Naive thymus-derived CD4-positive, alpha-beta T cell (primary cell): ENCODE measurements at regions of chr14 and their contacts with region 1.

Region 1: GRCh38 chr14:21455911-21456667 is at the start of gene CHD8:
- DNase-seq: peak; percentile 95 to 100 (median 100)
- ATAC-seq: peak; percentile 98
- H3K4me3 ChIP-seq: peak within 1 kb of the TSS; percentile 91
- H3K4me3 Mint-ChIP-seq: peak within 1 kb of the TSS; percentile 89 to 100 (median 98)
- H3K27ac ChIP-seq: peak within 1 kb of the TSS; percentile 94
- H3K27ac Mint-ChIP-seq: peak within 1 kb of the TSS; percentile 96 to 100 (median 99)
- H3K4me1 ChIP-seq: peaks cover 17 to 21% of the 10 kb centered on the region in 2 donors
- H3K4me1 Mint-ChIP-seq: peaks cover 18 to 48% (median 41%) of the 10 kb centered on the region in 7 donors
- H3K27me3 ChIP-seq: no peaks in the 10 kb centered on the region
- H3K27me3 Mint-ChIP-seq: no peaks in the 10 kb centered on the region
- total RNA-seq, gene CHD8: 125 to 143 (median 133) TPM

Region 2: DNA sequence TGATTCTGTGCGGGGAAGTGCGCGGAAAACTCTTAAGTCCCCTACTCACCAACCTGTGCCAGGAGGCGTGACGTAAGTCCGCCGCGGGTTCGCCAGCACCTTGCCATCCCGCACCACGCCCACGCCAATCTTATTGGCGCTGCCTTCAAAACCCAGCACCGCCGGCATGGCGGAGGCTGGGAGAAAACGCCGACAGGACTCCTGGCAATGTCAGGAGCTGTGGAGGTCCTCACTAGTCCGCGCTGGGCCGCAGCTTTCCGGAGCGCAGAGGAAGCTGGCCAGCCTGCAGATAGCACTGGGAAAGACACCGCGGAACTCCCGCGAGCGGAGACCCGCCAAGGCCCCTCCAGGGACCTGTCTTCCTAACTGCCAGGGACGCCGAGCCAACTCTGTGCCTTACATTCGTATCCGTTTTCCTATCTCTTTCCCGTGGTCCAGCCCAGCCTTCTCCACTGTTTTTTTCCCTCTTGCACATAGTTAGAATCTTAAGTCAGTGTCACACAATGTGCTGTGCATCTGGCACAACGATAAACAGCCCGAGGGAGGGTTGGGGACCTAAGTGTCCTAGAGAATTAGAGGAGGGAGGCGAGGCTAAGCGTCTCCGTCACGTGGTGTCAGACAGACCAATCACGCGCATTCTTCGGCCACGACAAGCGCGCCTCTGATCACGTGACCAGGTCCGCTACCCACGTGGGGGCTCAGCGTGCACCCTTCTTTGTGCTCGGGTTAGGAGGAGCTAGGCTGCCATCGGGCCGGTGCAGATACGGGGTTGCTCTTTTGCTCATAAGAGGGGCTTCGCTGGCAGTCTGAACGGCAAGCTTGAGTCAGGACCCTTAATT is 1001.4 kb before region 1 on chr14 and contains the starts of genes APEX1 and OSGEP:
- CTCF ChIA-PET with region 1: no interaction called
- POLR2A ChIA-PET with region 1: no interaction called
- intact Hi-C with region 1: loop called in 1 of 2 experiments (anchors 10 kb)
- DNase-seq: peak; percentile 86 to 99 (median 98)
- ATAC-seq: peak; percentile 88
- H3K4me3 ChIP-seq: peak within 1 kb of the TSS; percentile 80
- H3K4me3 Mint-ChIP-seq: peak within 1 kb of the TSS in 6 of 10 donors; percentile 7 to 43 (median 30)
- H3K27ac ChIP-seq: peak within 1 kb of the TSS; percentile 85
- H3K27ac Mint-ChIP-seq: no peak within 1 kb of the TSS
- H3K4me1 ChIP-seq: peaks cover 13 to 18% of the 10 kb centered on the region in 2 donors
- H3K4me1 Mint-ChIP-seq: peaks cover 12 to 30% (median 19%) of the 10 kb centered on the region in 7 donors
- H3K27me3 ChIP-seq: no peaks in the 10 kb centered on the region
- H3K27me3 Mint-ChIP-seq: no peaks in the 10 kb centered on the region
- total RNA-seq, gene APEX1: 97.4 to 159 (median 129) TPM
- total RNA-seq, gene OSGEP: 54.2 to 77.2 (median 69.1) TPM

Region 3: DNA sequence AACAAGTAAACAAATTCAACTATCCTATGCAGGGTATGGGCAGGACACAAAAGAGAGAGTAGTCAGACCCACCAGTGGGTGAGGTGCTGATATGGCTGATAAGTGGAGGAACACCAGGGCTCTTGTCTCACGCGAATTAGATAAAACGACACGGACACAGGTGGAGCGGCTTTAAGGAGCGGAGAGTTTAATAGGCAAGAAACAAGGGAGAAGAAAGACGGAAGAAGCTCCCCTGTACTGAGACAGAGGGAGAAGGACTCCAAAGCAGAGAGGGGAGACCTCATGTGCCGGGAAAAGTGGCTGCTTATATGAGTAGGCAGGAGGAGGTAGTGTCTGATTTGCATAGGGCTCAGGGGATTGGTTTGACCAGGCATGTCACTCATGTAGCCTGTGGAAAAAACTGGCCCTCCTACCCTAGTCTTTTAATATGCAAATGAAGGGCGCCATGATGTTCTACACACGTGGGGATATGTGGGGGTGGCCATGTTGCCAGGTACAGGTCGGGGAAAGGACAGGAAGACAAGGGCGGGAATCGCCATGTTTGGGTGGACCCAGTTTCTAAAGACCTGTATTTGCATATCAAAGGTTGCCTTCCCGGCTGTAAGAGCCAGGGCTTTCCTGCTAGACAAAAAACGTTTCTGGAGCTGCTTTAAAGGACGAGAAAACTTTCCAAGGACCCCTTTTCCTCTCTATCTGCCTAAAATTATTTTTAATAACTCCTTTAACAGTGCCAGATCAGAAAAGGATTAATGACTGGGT is 147.4 kb before region 1 on chr14:
- CTCF ChIA-PET with region 1: no interaction called
- POLR2A ChIA-PET with region 1: interaction called, 3 read pairs
- intact Hi-C with region 1: loop called in 1 of 2 experiments (anchors 1 kb)
- DNase-seq: peak; percentile 20 to 82 (median 78)
- ATAC-seq: peak; percentile 91
- H3K4me3 ChIP-seq: peak overlapping the region; percentile 63
- H3K4me3 Mint-ChIP-seq: peak overlapping the region; percentile 68 to 88 (median 83)
- H3K27ac ChIP-seq: peak overlapping the region; percentile 64
- H3K27ac Mint-ChIP-seq: peak overlapping the region; percentile 63 to 95 (median 82)
- H3K4me1 ChIP-seq: peaks cover 5 to 10% of the 10 kb centered on the region in 2 donors
- H3K4me1 Mint-ChIP-seq: peaks cover 7 to 24% (median 18%) of the 10 kb centered on the region in 7 donors
- H3K27me3 ChIP-seq: no peaks in the 10 kb centered on the region
- H3K27me3 Mint-ChIP-seq: peaks cover 0 to 17% (median 0%) of the 10 kb centered on the region in 5 donors

Region 4: GRCh38 chr14:21476925-21477681 is 21.0 kb after region 1 on chr14 and contains the starts of genes RAB2B and TOX4:
- CTCF ChIA-PET with region 1: interaction called, 7 read pairs
- POLR2A ChIA-PET with region 1: interaction called, 53 read pairs
- intact Hi-C with region 1: loop called (anchors 1 kb)
- DNase-seq: peak; percentile 83 to 98 (median 97)
- ATAC-seq: peak; percentile 99
- H3K4me3 ChIP-seq: peak within 1 kb of the TSS; percentile 99
- H3K4me3 Mint-ChIP-seq: peak within 1 kb of the TSS; percentile 96 to 100 (median 99)
- H3K27ac ChIP-seq: peak within 1 kb of the TSS; percentile 88
- H3K27ac Mint-ChIP-seq: peak within 1 kb of the TSS; percentile 93 to 100 (median 98)
- H3K4me1 ChIP-seq: peaks cover 21 to 22% of the 10 kb centered on the region in 2 donors
- H3K4me1 Mint-ChIP-seq: peaks cover 18 to 74% (median 58%) of the 10 kb centered on the region in 7 donors
- H3K27me3 ChIP-seq: no peaks in the 10 kb centered on the region
- H3K27me3 Mint-ChIP-seq: no peaks in the 10 kb centered on the region
- total RNA-seq, gene RAB2B: 26.6 to 32.8 (median 30.5) TPM
- total RNA-seq, gene TOX4: 78.5 to 116 (median 86.5) TPM

Region 5: DNA sequence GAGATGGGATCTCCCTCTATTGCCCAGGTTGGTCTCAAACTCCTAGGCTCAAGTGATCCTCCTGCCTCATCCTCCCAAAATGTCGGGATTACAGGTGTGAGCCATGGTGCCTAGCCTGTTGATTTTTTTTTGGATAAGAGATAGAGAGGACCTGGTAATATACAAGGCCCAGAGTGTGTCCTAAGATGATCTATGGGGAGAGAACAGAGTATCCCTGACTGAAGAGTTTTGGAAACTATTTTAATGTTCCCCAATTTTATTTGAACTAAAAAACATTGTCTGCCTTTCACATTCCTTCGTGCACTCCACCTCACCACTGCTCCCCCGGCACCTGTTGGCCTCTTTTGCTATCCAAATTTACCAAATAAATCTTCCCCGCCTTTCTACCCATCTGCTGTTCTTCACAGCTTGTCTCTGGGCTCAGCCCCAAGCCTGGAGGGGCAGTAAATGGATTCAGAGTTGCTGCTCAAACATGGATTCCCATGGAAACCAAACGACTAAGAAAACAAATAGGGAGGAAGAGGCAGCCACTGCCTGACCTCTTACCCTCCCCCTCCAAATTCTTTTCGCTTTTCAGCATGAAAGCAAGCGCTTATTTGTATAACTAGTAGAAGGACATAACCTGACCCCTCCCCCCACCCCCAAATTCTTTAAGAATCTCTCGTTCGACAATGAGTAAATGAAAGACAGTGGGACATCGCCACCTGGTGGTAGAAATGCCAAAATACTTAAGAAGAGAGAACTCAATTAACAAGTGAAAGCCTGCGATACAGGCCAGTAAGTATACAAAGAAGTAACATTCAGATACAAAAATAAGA is 101.2 kb after region 1 on chr14:
- CTCF ChIA-PET with region 1: interaction called, 4 read pairs
- POLR2A ChIA-PET with region 1: no interaction called
- intact Hi-C with region 1: loop called (anchors 1 kb)
- DNase-seq: peak; percentile 25 to 81 (median 74)
- ATAC-seq: peak; percentile 84
- H3K4me3 ChIP-seq: peak overlapping the region; percentile 27
- H3K4me3 Mint-ChIP-seq: peak overlapping the region in 9 of 10 donors; percentile 14 to 71 (median 46)
- H3K27ac ChIP-seq: peak overlapping the region; percentile 24
- H3K27ac Mint-ChIP-seq: peak overlapping the region in 8 of 9 donors; percentile 6 to 92 (median 64)
- H3K4me1 ChIP-seq: peaks cover 0 to 4% of the 10 kb centered on the region in 2 donors
- H3K4me1 Mint-ChIP-seq: peaks cover 2 to 12% (median 7%) of the 10 kb centered on the region in 7 donors
- H3K27me3 ChIP-seq: no peaks in the 10 kb centered on the region
- H3K27me3 Mint-ChIP-seq: peaks cover 0 to 2% (median 0%) of the 10 kb centered on the region in 5 donors

Region 6: DNA sequence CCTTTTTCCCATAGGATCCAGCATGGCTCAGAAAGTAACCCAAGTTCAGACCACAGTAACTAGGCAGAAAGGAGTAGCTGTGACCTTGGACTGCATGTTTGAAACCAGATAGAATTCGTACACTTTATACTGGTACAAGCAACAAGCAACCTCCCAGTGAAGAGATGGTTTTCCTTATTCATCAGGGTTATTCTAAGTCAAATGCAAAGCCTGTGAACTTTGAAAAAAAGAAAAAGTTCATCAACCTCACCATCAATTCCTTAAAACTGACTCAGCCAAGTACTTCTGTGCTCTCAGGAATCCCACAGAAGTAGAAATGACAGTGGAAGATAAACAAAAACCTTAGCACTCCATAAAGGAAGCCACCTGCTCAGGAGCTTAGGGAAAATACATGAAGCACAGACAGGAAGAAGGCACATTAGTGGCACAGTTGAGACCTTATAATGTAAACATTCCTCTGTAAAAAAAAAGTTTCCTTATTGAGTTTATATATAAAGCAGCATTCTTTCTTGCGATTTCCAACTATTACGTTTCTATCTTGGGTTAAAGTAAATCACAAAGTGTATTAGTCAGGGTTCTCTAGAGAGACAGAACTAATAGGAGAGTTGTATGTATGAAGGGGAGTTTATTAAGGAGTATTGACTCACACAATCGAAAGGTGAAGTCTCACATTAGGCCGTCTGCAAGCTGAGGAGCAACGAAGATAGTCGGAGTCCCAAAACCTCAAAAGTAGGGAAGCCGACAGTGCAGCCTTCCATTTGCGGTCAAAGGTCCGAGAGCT is 734.5 kb after region 1 on chr14:
- CTCF ChIA-PET with region 1: no interaction called
- POLR2A ChIA-PET with region 1: no interaction called
- intact Hi-C with region 1: no loop called
- DNase-seq: no peak
- ATAC-seq: no peak
- H3K4me3 ChIP-seq: no peak overlapping the region
- H3K4me3 Mint-ChIP-seq: no peak overlapping the region
- H3K27ac ChIP-seq: no peak overlapping the region
- H3K27ac Mint-ChIP-seq: no peak overlapping the region
- H3K4me1 ChIP-seq: no peaks in the 10 kb centered on the region
- H3K4me1 Mint-ChIP-seq: no peaks in the 10 kb centered on the region
- H3K27me3 ChIP-seq: no peaks in the 10 kb centered on the region
- H3K27me3 Mint-ChIP-seq: no peaks in the 10 kb centered on the region

Region 7: DNA sequence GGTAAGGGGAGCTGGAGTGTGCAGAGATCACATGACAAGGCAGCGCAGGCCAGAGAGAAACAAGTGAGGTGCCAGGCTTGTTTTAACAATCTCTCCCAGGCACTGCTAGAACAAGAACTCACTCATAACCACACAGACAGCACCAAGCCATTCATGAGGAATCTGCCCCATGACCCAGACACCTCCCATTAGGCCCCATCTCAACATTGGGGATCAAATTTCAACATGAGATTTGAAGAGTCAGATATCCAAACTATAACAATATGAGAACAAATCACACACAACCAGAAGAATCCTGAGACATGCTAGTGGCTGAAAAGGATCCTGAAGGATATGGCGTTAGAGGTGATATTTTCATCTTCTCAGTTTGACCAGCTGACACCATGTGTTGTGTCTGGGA is 1166.2 kb after region 1 on chr14:
- CTCF ChIA-PET with region 1: no interaction called
- POLR2A ChIA-PET with region 1: no interaction called
- intact Hi-C with region 1: no loop called
- DNase-seq: no peak
- ATAC-seq: no peak
- H3K4me3 ChIP-seq: no peak overlapping the region
- H3K4me3 Mint-ChIP-seq: no peak overlapping the region
- H3K27ac ChIP-seq: no peak overlapping the region
- H3K27ac Mint-ChIP-seq: peak overlapping the region in 1 of 9 donors; percentile 24
- H3K4me1 ChIP-seq: no peaks in the 10 kb centered on the region
- H3K4me1 Mint-ChIP-seq: peaks cover 0 to 7% (median 3%) of the 10 kb centered on the region in 7 donors
- H3K27me3 ChIP-seq: no peaks in the 10 kb centered on the region
- H3K27me3 Mint-ChIP-seq: peaks cover 0 to 21% (median 3%) of the 10 kb centered on the region in 5 donors

Region 8: GRCh38 chr14:22766456-22767322 is 1310.6 kb after region 1 on chr14 and contains the start of gene OXA1L:
- CTCF ChIA-PET with region 1: no interaction called
- POLR2A ChIA-PET with region 1: no interaction called
- intact Hi-C with region 1: loop called in 1 of 2 experiments (anchors 5 kb)
- DNase-seq: peak; percentile 86 to 99 (median 96)
- ATAC-seq: peak; percentile 96
- H3K4me3 ChIP-seq: peak within 1 kb of the TSS; percentile 93
- H3K4me3 Mint-ChIP-seq: peak within 1 kb of the TSS; percentile 86 to 97 (median 90)
- H3K27ac ChIP-seq: peak within 1 kb of the TSS; percentile 86
- H3K27ac Mint-ChIP-seq: peak within 1 kb of the TSS; percentile 88 to 99 (median 97)
- H3K4me1 ChIP-seq: peaks cover 18 to 24% of the 10 kb centered on the region in 2 donors
- H3K4me1 Mint-ChIP-seq: peaks cover 21 to 43% (median 39%) of the 10 kb centered on the region in 7 donors
- H3K27me3 ChIP-seq: no peaks in the 10 kb centered on the region
- H3K27me3 Mint-ChIP-seq: no peaks in the 10 kb centered on the region
- total RNA-seq, gene OXA1L: 112 to 177 (median 144) TPM

Region 9: GRCh38 chr14:22781586-22781991 is 1325.5 kb after region 1 on chr14:
- CTCF ChIA-PET with region 1: no interaction called
- POLR2A ChIA-PET with region 1: no interaction called
- intact Hi-C with region 1: no loop called
- DNase-seq: no peak
- ATAC-seq: no peak
- H3K4me3 ChIP-seq: no peak overlapping the region
- H3K4me3 Mint-ChIP-seq: no peak overlapping the region
- H3K27ac ChIP-seq: no peak overlapping the region
- H3K27ac Mint-ChIP-seq: no peak overlapping the region
- H3K4me1 ChIP-seq: no peaks in the 10 kb centered on the region
- H3K4me1 Mint-ChIP-seq: peaks cover 0 to 3% (median 0%) of the 10 kb centered on the region in 7 donors
- H3K27me3 ChIP-seq: no peaks in the 10 kb centered on the region
- H3K27me3 Mint-ChIP-seq: no peaks in the 10 kb centered on the region